Activated naive CD4-positive, alpha-beta T cell treated with anti-CD3 and anti-CD28 coated beads for 36 hours (primary cell): ENCODE measurements at regions of chr6 and their contacts with region 1.

Region 1: DNA sequence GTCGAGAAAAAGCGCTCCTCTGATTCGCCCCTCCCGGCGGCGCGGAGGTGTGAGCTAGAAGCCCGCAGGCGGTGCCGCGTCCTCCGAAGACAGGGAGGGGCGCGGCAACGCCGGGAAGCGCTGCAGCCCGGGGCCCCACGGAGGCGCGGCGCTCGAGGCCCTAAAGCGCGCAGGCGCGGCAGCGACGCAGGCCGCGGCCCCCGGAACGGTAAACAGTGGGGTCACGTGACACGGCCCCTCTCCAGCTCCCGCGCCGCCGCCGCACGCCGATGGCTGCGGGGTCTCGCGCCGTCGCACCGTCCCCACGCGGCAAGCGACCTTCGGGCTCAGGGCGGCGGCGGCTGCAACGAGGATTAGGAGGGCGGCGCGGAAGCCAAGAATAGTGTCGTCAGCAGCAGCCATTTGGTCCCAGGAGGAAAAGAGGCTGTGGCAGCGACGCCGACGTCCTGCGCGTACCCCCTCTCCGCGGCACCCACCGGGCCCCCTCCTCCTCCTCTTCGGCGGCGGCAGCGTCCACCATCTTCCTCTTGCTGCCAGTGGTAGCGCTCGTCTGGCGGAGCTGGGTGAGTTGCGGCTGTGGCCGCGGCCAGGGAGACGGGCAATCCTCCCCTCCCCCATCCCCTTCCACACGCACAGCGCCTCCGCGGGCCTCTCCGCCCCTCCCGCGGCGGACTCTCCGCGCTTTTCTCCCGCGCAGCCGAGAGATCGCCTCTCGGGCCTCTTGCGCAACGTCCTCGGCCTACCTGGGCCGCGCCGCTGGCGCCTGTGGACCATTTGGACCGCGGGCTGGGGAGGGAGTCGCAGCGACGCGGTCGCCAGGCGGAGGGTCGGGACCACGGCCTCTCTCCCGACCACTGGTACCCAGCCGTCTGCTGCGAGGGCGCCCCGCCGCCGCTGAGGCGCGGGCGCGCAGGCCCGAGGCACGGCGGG is at the start of gene PHF3:
- DNase-seq: peak; percentile 90
- H3K4me3 Mint-ChIP-seq: peak within 1 kb of the TSS; percentile 95
- H3K27ac Mint-ChIP-seq: peak within 1 kb of the TSS; percentile 92
- H3K4me1 Mint-ChIP-seq: peaks cover 37% of the 10 kb centered on the region
- H3K27me3 Mint-ChIP-seq: no peaks in the 10 kb centered on the region
- total RNA-seq, gene PHF3: 45.8 to 47.6 TPM

Region 2: GRCh38 chr6:63649269-63649668 is 13.4 kb after region 1 on chr6:
- CTCF ChIA-PET with region 1: no interaction called
- intact Hi-C with region 1: loop called (anchors 1 kb)
- DNase-seq: no peak
- H3K4me3 Mint-ChIP-seq: no peak overlapping the region
- H3K27ac Mint-ChIP-seq: no peak overlapping the region
- H3K4me1 Mint-ChIP-seq: peaks cover 63% of the 10 kb centered on the region
- H3K27me3 Mint-ChIP-seq: no peaks in the 10 kb centered on the region

Region 3: GRCh38 chr6:63677282-63677681 is 41.4 kb after region 1 on chr6:
- CTCF ChIA-PET with region 1: no interaction called
- intact Hi-C with region 1: loop called (anchors 2 kb)
- DNase-seq: no peak
- H3K4me3 Mint-ChIP-seq: no peak overlapping the region
- H3K27ac Mint-ChIP-seq: no peak overlapping the region
- H3K4me1 Mint-ChIP-seq: peaks cover 34% of the 10 kb centered on the region
- H3K27me3 Mint-ChIP-seq: no peaks in the 10 kb centered on the region